CD8-positive, alpha-beta memory T cell (primary cell): ENCODE measurements at regions of chr9 and their contacts with region 1.

Region 1: DNA sequence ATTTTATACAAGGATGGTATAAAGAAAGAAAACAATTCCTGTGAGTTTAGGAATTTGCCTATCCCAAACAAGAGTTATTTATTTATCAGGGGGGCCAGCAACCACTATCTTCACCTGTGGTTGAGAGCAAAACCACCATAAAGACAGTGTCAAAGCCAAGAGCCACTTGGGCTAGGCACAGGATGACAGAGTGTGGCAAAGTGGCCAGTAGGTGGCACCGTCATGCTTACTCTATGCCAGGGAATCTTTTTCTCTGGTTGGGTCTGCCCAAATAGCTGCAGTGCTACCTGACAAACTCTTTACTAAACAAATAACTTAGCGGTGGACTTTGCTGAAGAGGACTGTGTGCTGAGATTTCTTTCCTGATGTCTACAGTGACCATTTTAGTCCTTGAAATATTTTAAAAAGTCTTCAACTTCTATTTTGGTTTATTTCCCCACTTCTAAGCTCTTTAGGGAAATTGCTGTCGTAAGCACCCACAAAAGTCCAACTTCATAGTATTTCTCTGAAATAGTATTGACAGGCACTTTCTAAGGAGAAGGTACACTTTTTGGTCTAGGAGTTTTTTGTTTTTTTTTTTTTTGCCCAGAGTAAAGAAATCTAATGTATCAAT is 285.0 kb downstream of the RFX3 start:
- DNase-seq: peak; percentile 12 to 64 (median 29)
- H3K4me3 ChIP-seq: no peak overlapping the region
- H3K4me3 Mint-ChIP-seq: no peak overlapping the region
- H3K27ac ChIP-seq: no peak overlapping the region
- H3K27ac Mint-ChIP-seq: no peak overlapping the region
- H3K4me1 ChIP-seq: no peaks in the 10 kb centered on the region
- H3K4me1 Mint-ChIP-seq: peaks cover 0 to 2% (median 0%) of the 10 kb centered on the region in 3 donors
- H3K27me3 ChIP-seq: no peaks in the 10 kb centered on the region
- H3K27me3 Mint-ChIP-seq: no peaks in the 10 kb centered on the region

Region 2: DNA sequence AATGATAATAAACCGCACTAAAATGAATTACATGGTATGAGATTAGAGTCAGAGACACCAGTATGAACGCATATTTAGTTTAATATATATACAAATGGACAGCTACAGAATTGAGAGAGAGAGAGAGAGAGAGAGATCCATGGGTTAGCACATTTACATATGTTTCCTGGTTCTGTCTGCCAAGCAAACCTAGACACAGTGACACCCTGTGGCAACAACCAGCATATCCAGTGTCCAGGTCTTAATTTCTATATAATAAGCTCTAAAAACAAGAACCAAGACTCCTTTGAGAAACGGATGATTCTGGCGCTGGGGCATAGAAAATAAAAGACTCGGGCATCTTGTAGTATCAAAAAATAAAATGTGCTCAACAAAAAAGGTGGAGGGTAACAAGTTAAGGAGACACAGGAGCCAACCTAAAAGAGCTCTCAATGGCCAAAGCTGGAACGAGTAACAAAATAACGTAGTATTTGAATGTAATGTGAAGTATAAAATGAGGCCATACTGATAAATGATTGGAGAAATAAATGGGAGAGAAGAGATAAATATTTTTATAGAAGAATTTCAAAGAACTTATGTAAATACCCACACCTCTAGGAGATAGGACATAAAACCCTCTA is 200.5 kb after region 1 on chr9:
- CTCF ChIA-PET with region 1: interaction called, 10 read pairs
- POLR2A ChIA-PET with region 1: no interaction called
- DNase-seq: peak; percentile 4 to 55 (median 30)
- H3K4me3 ChIP-seq: no peak overlapping the region
- H3K4me3 Mint-ChIP-seq: no peak overlapping the region
- H3K27ac ChIP-seq: no peak overlapping the region
- H3K27ac Mint-ChIP-seq: no peak overlapping the region
- H3K4me1 ChIP-seq: no peaks in the 10 kb centered on the region
- H3K4me1 Mint-ChIP-seq: peaks cover 5 to 13% (median 5%) of the 10 kb centered on the region in 3 donors
- H3K27me3 ChIP-seq: no peaks in the 10 kb centered on the region
- H3K27me3 Mint-ChIP-seq: no peaks in the 10 kb centered on the region